Mammary epithelial cell (primary cell): ENCODE measurements at regions of chr9 and their contacts with region 1.

Region 1: DNA sequence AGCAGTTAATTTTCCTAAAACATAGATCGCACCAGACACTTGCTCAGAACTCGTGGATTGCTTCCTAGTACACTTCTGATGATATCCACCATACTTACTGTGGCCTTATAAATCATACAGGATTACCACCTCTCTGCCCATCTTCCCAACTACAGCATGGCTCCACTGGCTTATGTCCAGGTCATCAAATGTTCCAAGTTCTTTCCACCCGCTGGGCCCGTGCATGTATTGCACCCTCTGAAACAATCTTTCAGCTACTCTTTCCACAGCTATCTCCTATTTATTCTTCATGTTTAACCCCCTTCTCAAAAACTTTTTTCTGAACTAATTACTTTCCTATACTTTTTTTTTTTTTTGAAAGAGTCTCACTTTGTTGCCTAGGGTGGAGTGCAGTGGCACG is 18.5 kb downstream of the FBXW2 start:
- DNase-seq: no peak
- H3K4me3 ChIP-seq: no peak overlapping the region
- H3K27ac ChIP-seq: no peak overlapping the region
- H3K4me1 ChIP-seq: peaks cover 26% of the 10 kb centered on the region
- H3K27me3 ChIP-seq: no peaks in the 10 kb centered on the region
- CTCF ChIP-seq: no peak

Region 2: DNA sequence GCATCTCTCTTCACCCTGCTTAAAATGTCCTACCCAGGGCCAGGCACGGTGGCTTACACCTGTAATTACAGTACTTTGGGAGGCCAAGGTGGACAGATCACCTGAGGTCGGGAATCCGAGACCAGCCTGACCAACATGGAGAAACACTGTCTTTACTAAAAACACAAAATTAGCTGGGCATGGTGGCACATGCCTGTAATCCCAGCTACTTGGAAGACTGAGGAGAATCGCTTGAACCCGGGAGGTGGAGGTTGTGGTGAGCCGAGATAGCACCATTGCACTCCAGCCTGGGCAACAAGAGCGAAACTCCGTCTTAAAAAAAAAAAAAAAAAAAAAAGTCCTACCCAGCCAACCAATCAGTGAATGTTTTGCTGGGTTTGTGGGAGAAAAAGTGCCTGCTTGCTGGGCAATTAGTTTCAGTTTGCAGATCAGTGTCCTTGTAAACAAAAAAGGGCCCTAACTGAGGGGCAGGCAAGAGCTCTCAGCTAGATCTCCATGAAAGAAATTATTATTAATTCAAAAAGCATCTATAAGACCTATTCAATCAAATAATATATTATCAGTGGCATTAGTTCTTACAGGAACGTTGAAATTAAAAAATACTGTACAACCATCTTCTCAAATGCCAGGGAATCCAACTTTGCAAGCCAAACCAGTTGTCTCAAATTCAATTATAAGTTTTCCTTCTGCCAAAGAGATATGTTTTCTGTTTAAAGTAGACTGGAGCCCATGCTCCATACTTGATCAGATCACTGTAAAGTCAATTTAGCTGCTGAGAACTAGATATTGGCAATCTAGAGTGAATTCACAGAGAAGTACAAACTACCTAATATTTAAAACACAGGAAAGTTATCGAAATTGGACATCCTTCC is 64.4 kb before region 1 on chr9:
- CTCF ChIA-PET with region 1: no interaction called
- dilution Hi-C with region 1: no loop called
- in situ Hi-C with region 1: no loop called
- intact Hi-C with region 1: no loop called
- DNase-seq: peak; percentile 73
- H3K4me3 ChIP-seq: peak overlapping the region; percentile 40 to 58 (median 44)
- H3K27ac ChIP-seq: peak overlapping the region; percentile 82
- H3K4me1 ChIP-seq: peaks cover 31% of the 10 kb centered on the region
- H3K27me3 ChIP-seq: no peaks in the 10 kb centered on the region
- CTCF ChIP-seq: no peak

Region 3: DNA sequence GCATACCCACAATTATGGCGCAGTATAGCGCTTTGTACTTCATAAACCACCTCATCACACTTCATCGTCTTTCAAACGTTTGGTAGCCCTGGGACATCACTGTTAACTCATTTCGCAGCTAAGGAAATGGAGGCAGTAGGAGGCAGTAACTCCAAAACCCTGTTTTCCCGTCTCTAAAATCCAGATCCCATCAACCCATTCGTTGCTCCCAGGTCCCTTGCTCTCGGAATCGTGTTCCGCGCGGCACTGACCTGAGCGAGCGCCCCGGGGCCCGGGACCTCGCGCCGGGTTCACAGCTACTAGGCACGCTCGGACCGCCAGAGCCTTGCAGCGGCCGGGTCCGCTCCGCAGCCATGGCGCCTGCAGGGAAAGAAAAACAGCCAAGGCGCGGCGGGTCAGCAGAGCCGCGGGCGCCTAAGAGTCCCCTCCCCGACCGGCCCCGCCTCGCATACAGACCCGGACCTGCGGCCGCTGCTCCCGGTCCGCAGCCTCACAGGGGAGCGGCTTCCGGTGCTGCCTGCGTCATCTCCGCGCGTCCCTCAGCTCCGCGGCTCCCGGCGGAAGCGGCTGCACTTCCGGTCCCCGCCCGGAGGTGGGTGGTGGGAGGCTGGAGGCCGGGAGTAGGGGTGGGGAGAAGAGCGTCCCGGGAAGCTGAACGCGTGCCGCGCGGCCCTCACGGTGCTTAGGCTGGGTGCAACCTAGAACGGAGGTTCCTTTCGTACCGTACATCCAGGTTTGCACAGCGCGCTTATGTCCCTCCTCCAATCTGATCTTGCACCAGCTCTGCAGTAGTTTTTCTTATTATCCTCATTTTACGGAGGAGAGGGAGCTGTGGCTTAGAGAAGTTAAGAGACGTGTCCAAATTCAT is 18.4 kb after region 1 on chr9 and contains the start of gene FBXW2:
- CTCF ChIA-PET with region 1: no interaction called
- dilution Hi-C with region 1: no loop called
- in situ Hi-C with region 1: no loop called
- intact Hi-C with region 1: loop called (anchors 1 kb)
- DNase-seq: peak; percentile 90
- H3K4me3 ChIP-seq: peak within 1 kb of the TSS; percentile 74 to 100 (median 96)
- H3K27ac ChIP-seq: peak within 1 kb of the TSS; percentile 92
- H3K4me1 ChIP-seq: peaks cover 19% of the 10 kb centered on the region
- H3K27me3 ChIP-seq: no peaks in the 10 kb centered on the region
- CTCF ChIP-seq: no peak
- total RNA-seq, gene FBXW2: 39.3 to 70.1 TPM

Region 4: GRCh38 chr9:120820095-120820494 is 45.4 kb after region 1 on chr9:
- CTCF ChIA-PET with region 1: no interaction called
- dilution Hi-C with region 1: no loop called
- in situ Hi-C with region 1: no loop called
- intact Hi-C with region 1: no loop called
- DNase-seq: no peak
- H3K4me3 ChIP-seq: no peak overlapping the region
- H3K27ac ChIP-seq: no peak overlapping the region
- H3K4me1 ChIP-seq: no peaks in the 10 kb centered on the region
- H3K27me3 ChIP-seq: no peaks in the 10 kb centered on the region
- CTCF ChIP-seq: no peak

Region 5: GRCh38 chr9:120868676-120869359 is 94.1 kb after region 1 on chr9:
- CTCF ChIA-PET with region 1: no interaction called
- dilution Hi-C with region 1: no loop called
- in situ Hi-C with region 1: no loop called
- intact Hi-C with region 1: loop called (anchors 5 kb)
- DNase-seq: peak; percentile 98
- H3K4me3 ChIP-seq: peak overlapping the region; percentile 48 to 85 (median 50)
- H3K27ac ChIP-seq: peak overlapping the region; percentile 34
- H3K4me1 ChIP-seq: peaks cover 23% of the 10 kb centered on the region
- H3K27me3 ChIP-seq: no peaks in the 10 kb centered on the region
- CTCF ChIP-seq: peak; percentile 6 to 64